Activated B cell treated with CpG ODN at 0.5 μM for 24 hours (primary cell): ENCODE measurements at regions of chr10 and their contacts with region 1.

Region 1: GRCh38 chr10:61140765-61141392 is 196.9 kb upstream of the RHOBTB1 start:
- DNase-seq: no peak
- ATAC-seq: peak; percentile 58
- H3K4me3 Mint-ChIP-seq: no peak overlapping the region
- H3K27ac Mint-ChIP-seq: no peak overlapping the region
- H3K4me1 Mint-ChIP-seq: peaks cover 21% of the 10 kb centered on the region
- H3K27me3 Mint-ChIP-seq: peaks cover 4% of the 10 kb centered on the region
- CTCF ChIP-seq: no peak

Region 2: DNA sequence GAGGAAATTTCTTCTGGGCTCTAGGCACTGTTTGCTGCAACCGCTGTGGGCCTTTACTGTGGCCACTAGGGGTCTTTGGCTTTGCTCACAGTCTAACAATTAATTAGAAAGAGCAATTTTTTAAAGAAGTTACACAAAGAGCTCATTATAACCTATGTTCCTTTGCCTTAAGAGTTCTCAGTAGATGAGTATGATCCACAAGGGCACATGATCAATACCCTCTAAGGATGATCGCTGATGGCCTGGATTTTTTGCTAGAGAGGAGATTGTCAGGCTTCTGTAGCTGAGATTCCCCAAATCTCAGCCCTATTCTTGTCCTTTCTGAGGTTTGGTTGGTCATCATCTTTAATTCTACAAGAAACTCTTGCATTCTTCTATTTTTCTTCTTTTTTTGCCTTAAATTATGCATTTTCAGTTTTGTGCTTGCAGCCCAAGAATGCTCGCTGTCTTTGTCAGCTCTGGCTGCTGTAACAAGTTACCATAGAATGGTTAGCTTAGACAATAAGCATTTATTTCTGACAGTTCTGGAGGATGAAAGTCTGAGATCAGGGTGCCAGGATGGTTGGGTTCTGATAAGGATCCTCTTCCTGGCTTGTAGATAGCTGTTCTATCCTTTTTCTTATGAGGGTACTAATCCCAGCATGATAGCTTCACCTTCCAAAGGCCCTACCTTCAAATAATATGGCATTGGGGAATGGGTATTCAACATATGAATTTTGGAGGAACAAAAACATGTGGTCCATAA is 115.9 kb before region 1 on chr10:
- CTCF ChIA-PET with region 1: interaction called, 7 read pairs
- POLR2A ChIA-PET with region 1: no interaction called
- intact Hi-C with region 1: loop called (anchors 5 kb)
- DNase-seq: no peak
- ATAC-seq: peak; percentile 45
- H3K4me3 Mint-ChIP-seq: no peak overlapping the region
- H3K27ac Mint-ChIP-seq: no peak overlapping the region
- H3K4me1 Mint-ChIP-seq: no peaks in the 10 kb centered on the region
- H3K27me3 Mint-ChIP-seq: peaks cover 21% of the 10 kb centered on the region
- CTCF ChIP-seq: no peak

Region 3: DNA sequence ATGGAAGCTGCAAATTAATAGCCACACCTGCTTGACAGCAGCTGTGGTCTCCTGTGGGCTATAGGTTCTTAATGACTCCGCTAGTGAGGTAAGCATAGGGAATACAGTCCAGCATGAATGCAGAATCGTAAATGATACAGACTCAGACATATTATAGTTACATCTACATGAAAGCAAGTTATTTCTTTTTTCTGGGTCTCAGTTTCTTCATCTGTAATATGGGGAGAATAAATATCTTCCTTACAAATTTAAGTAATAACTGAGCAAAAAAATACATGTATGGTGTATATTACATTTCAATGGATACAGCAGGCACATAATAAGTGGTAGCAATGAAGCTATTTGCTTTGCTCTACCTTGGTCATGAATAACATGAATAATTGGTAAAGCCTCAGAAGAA is 49.0 kb after region 1 on chr10:
- CTCF ChIA-PET with region 1: interaction called, 10 read pairs
- POLR2A ChIA-PET with region 1: no interaction called
- intact Hi-C with region 1: loop called (anchors 1 kb)
- DNase-seq: no peak
- ATAC-seq: no peak
- H3K4me3 Mint-ChIP-seq: no peak overlapping the region
- H3K27ac Mint-ChIP-seq: no peak overlapping the region
- H3K4me1 Mint-ChIP-seq: no peaks in the 10 kb centered on the region
- H3K27me3 Mint-ChIP-seq: peaks cover 3% of the 10 kb centered on the region
- CTCF ChIP-seq: no peak

Region 4: DNA sequence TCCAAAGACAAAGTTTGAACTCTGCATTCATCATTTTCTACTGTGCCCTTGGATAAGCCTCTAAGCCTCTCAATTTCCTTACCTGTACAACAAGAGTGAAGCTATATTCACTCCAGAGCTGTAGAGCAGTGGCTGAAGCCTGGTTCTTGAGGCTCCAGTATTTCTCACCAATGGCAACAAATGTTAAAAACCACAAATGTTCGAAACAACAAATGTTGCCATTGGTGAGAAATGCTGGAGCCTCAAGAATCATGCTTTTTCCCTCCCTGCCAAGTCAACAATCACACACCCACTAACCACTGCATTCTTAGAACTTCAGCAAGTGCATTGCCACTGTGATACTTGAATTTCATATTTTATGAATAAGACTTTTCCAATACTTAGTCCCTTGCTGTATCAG is 74.4 kb after region 1 on chr10:
- CTCF ChIA-PET with region 1: no interaction called
- POLR2A ChIA-PET with region 1: no interaction called
- intact Hi-C with region 1: no loop called
- DNase-seq: no peak
- ATAC-seq: no peak
- H3K4me3 Mint-ChIP-seq: no peak overlapping the region
- H3K27ac Mint-ChIP-seq: no peak overlapping the region
- H3K4me1 Mint-ChIP-seq: no peaks in the 10 kb centered on the region
- H3K27me3 Mint-ChIP-seq: peaks cover 12% of the 10 kb centered on the region
- CTCF ChIP-seq: no peak

Region 5: GRCh38 chr10:61733358-61733940 is 592.6 kb after region 1 on chr10:
- CTCF ChIA-PET with region 1: interaction called, 30 read pairs
- POLR2A ChIA-PET with region 1: no interaction called
- intact Hi-C with region 1: loop called (anchors 1 kb)
- DNase-seq: no peak
- ATAC-seq: no peak
- H3K4me3 Mint-ChIP-seq: no peak overlapping the region
- H3K27ac Mint-ChIP-seq: no peak overlapping the region
- H3K4me1 Mint-ChIP-seq: no peaks in the 10 kb centered on the region
- H3K27me3 Mint-ChIP-seq: peaks cover 27% of the 10 kb centered on the region
- CTCF ChIP-seq: no peak

Region 6: DNA sequence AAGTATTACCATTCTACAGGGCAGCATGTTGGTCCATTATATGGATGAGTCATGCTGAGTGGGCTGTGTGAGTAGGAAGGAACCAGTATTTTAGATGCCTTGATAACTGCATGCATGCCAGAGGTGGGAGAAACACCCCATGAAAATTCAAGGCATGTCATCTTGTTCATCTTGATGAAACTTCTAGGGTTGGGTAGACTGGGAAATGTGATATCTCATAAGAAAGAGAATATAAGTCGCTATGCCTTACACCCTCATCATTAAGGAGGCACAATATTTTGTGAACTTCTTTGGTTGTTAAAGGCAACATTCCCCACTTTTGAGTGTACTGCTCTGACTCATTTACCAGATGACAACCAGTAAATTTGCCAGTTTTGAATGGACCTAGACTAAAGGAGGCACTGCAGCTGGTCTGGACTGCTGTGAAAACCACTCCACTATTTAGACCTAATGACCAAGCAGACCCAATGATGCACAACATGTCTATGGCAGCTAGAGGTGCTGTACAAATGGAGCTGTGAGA is 1281.2 kb after region 1 on chr10:
- CTCF ChIA-PET with region 1: no interaction called
- POLR2A ChIA-PET with region 1: no interaction called
- intact Hi-C with region 1: loop called (anchors 5 kb)
- DNase-seq: no peak
- ATAC-seq: no peak
- H3K4me3 Mint-ChIP-seq: no peak overlapping the region
- H3K27ac Mint-ChIP-seq: no peak overlapping the region
- H3K4me1 Mint-ChIP-seq: no peaks in the 10 kb centered on the region
- H3K27me3 Mint-ChIP-seq: peaks cover 13% of the 10 kb centered on the region
- CTCF ChIP-seq: no peak